Mammary epithelial cell (primary cell): ENCODE measurements at regions of chr2 and their contacts with region 1.

Region 1: GRCh38 chr2:100640431-100641124 is 77.8 kb downstream of the PDCL3 start:
- DNase-seq: peak; percentile 1
- H3K4me3 ChIP-seq: no peak overlapping the region
- H3K27ac ChIP-seq: no peak overlapping the region
- H3K4me1 ChIP-seq: no peaks in the 10 kb centered on the region
- H3K27me3 ChIP-seq: peaks cover 5% of the 10 kb centered on the region
- CTCF ChIP-seq: no peak

Region 2: DNA sequence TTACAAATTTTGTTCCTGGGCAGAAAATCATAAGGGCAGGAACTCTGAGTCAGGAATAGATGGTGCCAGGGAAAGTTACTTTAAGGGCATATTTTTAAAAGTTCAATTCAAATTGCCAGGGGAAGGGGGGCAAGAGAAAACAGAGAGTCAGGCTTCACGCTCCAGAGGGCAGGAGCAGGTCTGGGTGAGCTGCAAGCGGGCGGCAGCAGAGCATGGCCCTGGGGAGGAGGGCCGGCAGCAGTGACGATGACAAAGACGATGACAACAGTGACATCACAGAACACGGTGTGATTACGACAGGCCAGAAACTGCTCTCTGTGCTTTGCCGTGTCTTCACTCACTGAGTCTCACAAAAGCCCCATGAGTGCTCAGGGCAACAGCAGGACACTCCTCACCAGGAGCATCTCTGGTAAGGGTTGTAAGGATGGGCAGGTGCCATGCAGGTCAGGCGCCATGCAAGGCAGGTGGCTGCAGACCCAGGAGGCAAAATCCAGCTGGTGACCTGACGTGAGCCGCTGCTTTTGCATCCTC is 246.4 kb before region 1 on chr2:
- CTCF ChIA-PET with region 1: no interaction called
- dilution Hi-C with region 1: no loop called
- in situ Hi-C with region 1: no loop called
- intact Hi-C with region 1: no loop called
- DNase-seq: no peak
- H3K4me3 ChIP-seq: no peak overlapping the region
- H3K27ac ChIP-seq: no peak overlapping the region
- H3K4me1 ChIP-seq: no peaks in the 10 kb centered on the region
- H3K27me3 ChIP-seq: no peaks in the 10 kb centered on the region
- CTCF ChIP-seq: no peak

Region 3: GRCh38 chr2:100674666-100675065 is 34.1 kb after region 1 on chr2:
- CTCF ChIA-PET with region 1: no interaction called
- dilution Hi-C with region 1: loop called (anchors 5 kb)
- in situ Hi-C with region 1: no loop called
- intact Hi-C with region 1: no loop called
- DNase-seq: no peak
- H3K4me3 ChIP-seq: no peak overlapping the region
- H3K27ac ChIP-seq: no peak overlapping the region
- H3K4me1 ChIP-seq: no peaks in the 10 kb centered on the region
- H3K27me3 ChIP-seq: peaks cover 1% of the 10 kb centered on the region
- CTCF ChIP-seq: no peak